K562 (cell line): ENCODE measurements at regions of chr1 and their contacts with region 1.

Region 1: DNA sequence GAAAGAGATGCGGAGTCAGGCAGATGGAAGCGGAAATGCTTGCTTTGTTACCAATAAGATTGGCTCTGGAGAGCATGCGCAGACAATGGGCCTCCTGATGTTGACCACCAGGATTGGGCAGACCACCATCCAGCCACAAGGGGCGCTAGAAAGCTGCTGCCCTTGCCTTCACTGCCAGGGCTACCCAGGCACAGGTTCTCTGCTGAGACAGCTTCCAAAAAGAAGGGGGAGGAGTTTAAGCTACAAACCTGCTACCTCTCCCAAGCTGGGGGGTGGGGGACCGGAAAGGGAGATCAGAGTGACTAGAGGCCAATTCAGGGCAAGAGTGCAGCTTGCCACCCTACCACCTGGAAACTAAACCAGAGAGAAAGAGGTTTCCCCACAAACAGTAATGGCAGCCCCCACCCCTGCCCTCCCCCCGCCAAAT is 369.7 kb downstream of the RRAGC start:
- DNase-seq: peak; percentile 75 to 87 (median 83)
- ATAC-seq: peak; percentile 97
- H3K4me3 ChIP-seq: no peak overlapping the region
- H3K27ac ChIP-seq: no peak overlapping the region
- H3K4me1 ChIP-seq: no peaks in the 10 kb centered on the region
- H3K27me3 ChIP-seq: peaks cover 16 to 18% of the 10 kb centered on the region in 2 experiments
- CTCF ChIP-seq: peak; percentile 87 to 96 (median 88)
- EP300 ChIP-seq: no peak
- POLR2A ChIP-seq: no peak
- RAD21 ChIP-seq: peak; percentile 43 to 69

Region 2: GRCh38 chr1:38018864-38019343 is 471.0 kb before region 1 on chr1:
- CTCF ChIA-PET with region 1: no interaction called
- POLR2A ChIA-PET with region 1: no interaction called
- in situ Hi-C with region 1: no loop called
- intact Hi-C with region 1: no loop called
- DNase-seq: peak in 1 of 4 experiments; percentile 51
- ATAC-seq: peak; percentile 64
- H3K4me3 ChIP-seq: no peak overlapping the region
- H3K27ac ChIP-seq: no peak overlapping the region
- H3K4me1 ChIP-seq: peaks cover 6 to 25% of the 10 kb centered on the region in 2 experiments; a peak in 3 of 5 replicates
- H3K27me3 ChIP-seq: no peaks in the 10 kb centered on the region
- CTCF ChIP-seq: peak; percentile 56 to 87 (median 69); a peak in 5 of 6 replicates
- EP300 ChIP-seq: no peak
- POLR2A ChIP-seq: no peak
- RAD21 ChIP-seq: peak; percentile 72 to 75

Region 3: GRCh38 chr1:38403667-38404066 is 86.2 kb before region 1 on chr1:
- CTCF ChIA-PET with region 1: no interaction called
- POLR2A ChIA-PET with region 1: no interaction called
- in situ Hi-C with region 1: no loop called
- intact Hi-C with region 1: no loop called
- DNase-seq: peak in 1 of 4 experiments; percentile 10
- ATAC-seq: no peak
- H3K4me3 ChIP-seq: no peak overlapping the region
- H3K27ac ChIP-seq: no peak overlapping the region
- H3K4me1 ChIP-seq: no peaks in the 10 kb centered on the region
- H3K27me3 ChIP-seq: no peaks in the 10 kb centered on the region
- CTCF ChIP-seq: peak; percentile 17 to 37 (median 29); a peak in 2 of 6 replicates
- EP300 ChIP-seq: no peak
- POLR2A ChIP-seq: no peak
- RAD21 ChIP-seq: peak in 1 of 2 experiments; percentile 51; a peak in 2 of 4 replicates

Region 4: GRCh38 chr1:38581396-38581795 is 91.5 kb after region 1 on chr1:
- CTCF ChIA-PET with region 1: no interaction called
- POLR2A ChIA-PET with region 1: no interaction called
- in situ Hi-C with region 1: loop called (anchors 5 kb)
- intact Hi-C with region 1: loop called (anchors 5 kb)
- DNase-seq: no peak
- ATAC-seq: no peak
- H3K4me3 ChIP-seq: no peak overlapping the region
- H3K27ac ChIP-seq: no peak overlapping the region
- H3K4me1 ChIP-seq: no peaks in the 10 kb centered on the region; a peak in 1 of 5 replicates
- H3K27me3 ChIP-seq: no peaks in the 10 kb centered on the region; a peak in 1 of 5 replicates
- CTCF ChIP-seq: no peak
- EP300 ChIP-seq: no peak
- POLR2A ChIP-seq: no peak
- RAD21 ChIP-seq: no peak